Right lobe of liver (tissue), 6 donors: ENCODE measurements at regions of chr2 and their contacts with region 1.

Region 1: GRCh38 chr2:133579274-133579673 is 11.0 kb upstream of the NCKAP5 start:
- DNase-seq: peak; percentile 65 to 84 (median 81)
- ATAC-seq: peak; percentile 83 to 97 (median 92)
- H3K4me3 ChIP-seq: no peak overlapping the region
- H3K27ac ChIP-seq: peak overlapping the region in 2 of 3 donors; percentile 8 to 42
- H3K4me1 ChIP-seq: peaks cover 0 to 15% (median 6%) of the 10 kb centered on the region in 4 donors
- H3K27me3 ChIP-seq: no peaks in the 10 kb centered on the region
- CTCF ChIP-seq: no peak
- POLR2A ChIP-seq: no peak

Region 2: DNA sequence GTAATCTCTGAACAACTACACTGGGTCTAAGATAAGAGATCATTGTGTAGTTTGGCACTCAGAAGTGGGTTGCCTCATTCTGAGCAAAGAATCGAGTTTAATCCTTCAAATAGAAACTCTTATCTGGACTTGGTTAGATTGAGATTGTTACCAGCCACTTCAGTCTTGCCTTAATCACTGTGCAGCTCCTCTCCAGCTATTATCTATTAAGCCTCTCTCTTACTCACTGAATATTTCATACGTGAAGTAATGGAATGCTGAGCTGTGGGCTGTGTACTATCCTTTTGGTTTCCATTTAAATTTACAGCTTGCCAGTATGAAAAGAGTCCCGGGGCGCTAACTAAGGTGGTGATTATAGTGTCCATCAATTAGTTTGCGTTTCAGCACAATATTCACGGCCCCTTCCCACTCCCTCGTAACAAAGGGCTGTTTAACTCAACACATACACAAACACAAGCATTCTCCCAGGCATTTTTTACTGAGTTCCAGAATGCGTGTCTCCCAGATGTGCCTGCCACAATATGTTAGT is 54.7 kb after region 1 on chr2:
- intact Hi-C with region 1: no loop called
- DNase-seq: no peak
- ATAC-seq: peak in 3 of 4 donors; percentile 48 to 82 (median 79)
- H3K4me3 ChIP-seq: no peak overlapping the region
- H3K27ac ChIP-seq: no peak overlapping the region
- H3K4me1 ChIP-seq: no peaks in the 10 kb centered on the region
- H3K27me3 ChIP-seq: no peaks in the 10 kb centered on the region
- CTCF ChIP-seq: no peak
- POLR2A ChIP-seq: no peak

Region 3: GRCh38 chr2:133682347-133682746 is 103.1 kb after region 1 on chr2:
- intact Hi-C with region 1: no loop called
- DNase-seq: no peak
- ATAC-seq: no peak
- H3K4me3 ChIP-seq: no peak overlapping the region
- H3K27ac ChIP-seq: no peak overlapping the region
- H3K4me1 ChIP-seq: peaks cover 0 to 3% (median 0%) of the 10 kb centered on the region in 4 donors
- H3K27me3 ChIP-seq: no peaks in the 10 kb centered on the region
- CTCF ChIP-seq: no peak
- POLR2A ChIP-seq: no peak

Region 4: DNA sequence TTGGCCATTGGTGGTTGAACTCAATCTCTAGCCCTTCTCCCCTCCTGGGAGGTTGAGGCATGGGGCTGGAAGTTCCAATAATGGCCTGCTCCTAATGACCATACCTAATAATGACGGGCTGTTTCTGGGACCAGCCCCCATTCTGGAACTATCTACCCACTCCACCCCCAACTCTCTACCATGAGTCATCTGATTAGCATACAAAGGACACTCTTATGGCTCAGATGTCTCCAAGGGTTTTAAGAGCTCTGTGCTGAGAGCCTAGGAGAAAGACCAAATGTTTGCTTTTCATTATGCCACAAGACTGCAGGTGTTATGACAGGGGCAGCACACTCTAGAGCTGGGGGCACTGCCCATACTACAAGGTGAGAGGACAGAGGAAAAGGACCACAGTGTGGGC is 126.0 kb after region 1 on chr2:
- intact Hi-C with region 1: no loop called
- DNase-seq: no peak
- ATAC-seq: no peak
- H3K4me3 ChIP-seq: no peak overlapping the region
- H3K27ac ChIP-seq: no peak overlapping the region
- H3K4me1 ChIP-seq: no peaks in the 10 kb centered on the region
- H3K27me3 ChIP-seq: no peaks in the 10 kb centered on the region
- CTCF ChIP-seq: no peak
- POLR2A ChIP-seq: no peak

Region 5: DNA sequence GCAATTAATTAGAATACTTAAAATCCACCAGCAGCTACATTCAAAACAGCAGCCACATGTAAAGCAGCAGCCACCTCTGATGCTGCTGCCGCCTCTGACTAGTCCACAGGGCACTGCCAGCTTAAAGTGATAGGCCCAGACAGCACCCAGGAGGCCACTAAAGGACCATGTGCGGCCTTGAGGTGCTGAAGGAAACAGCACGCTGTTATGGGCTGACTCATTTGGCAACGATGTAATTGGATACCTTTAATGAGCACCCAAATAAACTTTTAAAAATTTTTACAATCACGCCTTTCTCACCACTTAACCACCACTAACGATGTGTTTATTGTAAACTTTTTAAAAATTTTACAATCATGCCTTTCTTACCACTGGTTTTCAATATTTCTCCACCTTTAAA is 198.3 kb after region 1 on chr2:
- intact Hi-C with region 1: loop called in 1 of 2 experiments (anchors 10 kb)
- DNase-seq: peak in 1 of 3 donors; percentile 24
- ATAC-seq: peak; percentile 54 to 69 (median 68)
- H3K4me3 ChIP-seq: no peak overlapping the region
- H3K27ac ChIP-seq: peak overlapping the region in 2 of 3 donors; percentile 72 to 73
- H3K4me1 ChIP-seq: peaks cover 0 to 19% (median 6%) of the 10 kb centered on the region in 4 donors
- H3K27me3 ChIP-seq: no peaks in the 10 kb centered on the region
- CTCF ChIP-seq: no peak
- POLR2A ChIP-seq: no peak